ENCODE measurements at regions of chr10 and their contacts with region 1.

Region 1: GRCh38 chr10:77710759-77711682 is 73.4 kb upstream of the KCNMA1 start:
- DNase-seq: peak; percentile 83 to 92
- H3K4me3 ChIP-seq: peak overlapping the region; percentile 37 to 57 (median 46)
- H3K27ac ChIP-seq: no peak overlapping the region
- H3K4me1 ChIP-seq: peaks cover 5 to 14% (median 10%) of the 10 kb centered on the region in 4 donors
- H3K27me3 ChIP-seq: peaks cover 0 to 48% (median 20%) of the 10 kb centered on the region in 3 donors
- CTCF ChIP-seq: peak in 5 of 7 experiments; percentile 82 to 99 (median 93)
- EP300 ChIP-seq: no peak
- POLR2A ChIP-seq: no peak

Region 2: GRCh38 chr10:77173615-77174461 is 537.2 kb before region 1 on chr10:
- intact Hi-C with region 1: loop called (anchors 10 kb)
- DNase-seq: peak; percentile 79 to 93
- H3K4me3 ChIP-seq: no peak overlapping the region
- H3K27ac ChIP-seq: peak overlapping the region in 2 of 5 donors; percentile 10 to 16
- H3K4me1 ChIP-seq: peaks cover 0 to 12% (median 2%) of the 10 kb centered on the region in 4 donors
- H3K27me3 ChIP-seq: peaks cover 0 to 5% (median 0%) of the 10 kb centered on the region in 3 donors
- CTCF ChIP-seq: peak in 5 of 7 experiments; percentile 81 to 90 (median 86)
- EP300 ChIP-seq: no peak
- POLR2A ChIP-seq: no peak

Measured in stomach (tissue), 19 donors.